ENCODE measurements at regions of chr14 and their contacts with region 1.

Region 1: GRCh38 chr14:21367582-21368144 is 16.2 kb downstream of the SUPT16H start:
- DNase-seq: no peak
- ATAC-seq: no peak
- H3K4me3 ChIP-seq: no peak overlapping the region
- H3K27ac ChIP-seq: no peak overlapping the region
- H3K4me1 ChIP-seq: no peaks in the 10 kb centered on the region
- H3K27me3 ChIP-seq: no peaks in the 10 kb centered on the region

Region 2: GRCh38 chr14:21414137-21414631 is 46.5 kb after region 1 on chr14:
- intact Hi-C with region 1: loop called in 1 of 4 experiments (anchors 10 kb)
- DNase-seq: no peak
- ATAC-seq: no peak
- H3K4me3 ChIP-seq: no peak overlapping the region
- H3K27ac ChIP-seq: no peak overlapping the region
- H3K4me1 ChIP-seq: no peaks in the 10 kb centered on the region
- H3K27me3 ChIP-seq: no peaks in the 10 kb centered on the region

Region 3: DNA sequence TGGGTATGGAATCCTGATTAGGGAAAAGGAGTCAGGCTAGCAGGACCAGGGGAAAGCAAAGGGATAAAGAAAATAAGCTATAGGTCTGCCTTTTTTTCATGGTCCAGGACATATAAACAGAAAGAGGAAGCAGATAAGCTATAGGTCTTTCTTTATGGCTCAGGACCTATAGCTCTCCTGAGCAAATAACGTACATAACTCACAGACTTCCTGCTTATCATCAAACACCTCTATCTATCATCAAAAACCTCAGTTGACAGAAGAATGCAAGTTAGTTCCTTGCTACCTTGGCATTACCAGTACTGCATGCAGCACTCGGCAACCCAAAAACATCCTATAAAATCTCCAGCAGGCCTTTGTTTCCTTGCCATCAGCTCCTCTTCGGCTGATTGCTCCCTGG is 544.7 kb after region 1 on chr14:
- intact Hi-C with region 1: no loop called
- DNase-seq: no peak
- ATAC-seq: no peak
- H3K4me3 ChIP-seq: no peak overlapping the region
- H3K27ac ChIP-seq: no peak overlapping the region
- H3K4me1 ChIP-seq: no peaks in the 10 kb centered on the region
- H3K27me3 ChIP-seq: no peaks in the 10 kb centered on the region

Measured in right cardiac atrium (tissue), 5 donors.